ENCODE measurements at regions of chr7 and their contacts with region 1.

Region 1: DNA sequence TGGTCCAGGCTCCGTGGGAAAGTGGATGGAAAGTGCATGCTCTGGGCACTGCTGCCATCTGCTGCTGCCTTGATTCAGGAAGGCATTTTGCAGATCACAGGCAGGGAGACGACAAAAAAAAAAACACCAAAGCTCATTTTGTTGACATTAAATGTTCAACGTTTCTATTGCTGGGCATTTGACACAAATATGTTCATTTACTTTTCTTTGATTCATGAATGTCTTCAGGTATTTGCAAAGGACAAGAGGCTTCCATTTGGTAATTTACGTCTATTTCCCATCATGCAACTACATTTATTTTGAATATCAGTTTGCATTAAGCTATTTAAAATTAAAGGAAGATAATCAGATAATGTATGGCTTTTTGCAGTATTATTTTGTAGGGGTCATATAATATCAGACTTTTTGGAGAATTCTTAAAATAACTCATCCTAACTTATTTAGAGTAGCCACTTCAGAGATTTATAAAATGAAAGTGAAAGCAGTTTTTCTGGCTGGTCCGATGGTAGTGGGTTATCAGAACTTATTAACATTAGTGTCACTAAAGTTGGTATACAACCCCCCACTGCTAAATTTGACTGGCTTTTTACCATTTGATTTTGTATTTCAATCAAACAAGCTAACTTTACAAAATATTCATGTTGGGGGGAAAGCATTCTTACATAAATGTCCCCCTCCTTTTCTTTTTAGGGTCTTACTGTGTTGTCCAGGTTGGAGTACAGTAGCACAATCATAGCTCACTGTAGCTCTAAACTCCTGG is 65.3 kb downstream of the PDIA4 start:
- DNase-seq: peak; percentile 86
- H3K4me3 Mint-ChIP-seq: peak overlapping the region; percentile 91
- H3K27ac Mint-ChIP-seq: peak overlapping the region; percentile 95
- H3K4me1 Mint-ChIP-seq: peaks cover 25% of the 10 kb centered on the region
- H3K27me3 Mint-ChIP-seq: no peaks in the 10 kb centered on the region

Region 2: GRCh38 chr7:148262721-148263229 is 700.2 kb before region 1 on chr7:
- CTCF ChIA-PET with region 1: interaction called, 7 read pairs
- intact Hi-C with region 1: loop called (anchors 1 kb)
- DNase-seq: peak; percentile 77
- H3K4me3 Mint-ChIP-seq: peak overlapping the region; percentile 23
- H3K27ac Mint-ChIP-seq: no peak overlapping the region
- H3K4me1 Mint-ChIP-seq: peaks cover 8% of the 10 kb centered on the region
- H3K27me3 Mint-ChIP-seq: peaks cover 9% of the 10 kb centered on the region

Region 3: GRCh38 chr7:148535217-148535616 is 427.8 kb before region 1 on chr7:
- CTCF ChIA-PET with region 1: no interaction called
- intact Hi-C with region 1: loop called (anchors 1 kb)
- DNase-seq: peak; percentile 79
- H3K4me3 Mint-ChIP-seq: peak overlapping the region; percentile 69
- H3K27ac Mint-ChIP-seq: peak overlapping the region; percentile 76
- H3K4me1 Mint-ChIP-seq: peaks cover 10% of the 10 kb centered on the region
- H3K27me3 Mint-ChIP-seq: peaks cover 10% of the 10 kb centered on the region

Region 4: GRCh38 chr7:148807436-148807835 is 155.6 kb before region 1 on chr7:
- CTCF ChIA-PET with region 1: interaction called, 9 read pairs
- intact Hi-C with region 1: loop called (anchors 2 kb)
- DNase-seq: no peak
- H3K4me3 Mint-ChIP-seq: no peak overlapping the region
- H3K27ac Mint-ChIP-seq: no peak overlapping the region
- H3K4me1 Mint-ChIP-seq: peaks cover 8% of the 10 kb centered on the region
- H3K27me3 Mint-ChIP-seq: no peaks in the 10 kb centered on the region

Region 5: GRCh38 chr7:148940702-148941597 is 22.1 kb before region 1 on chr7:
- CTCF ChIA-PET with region 1: interaction called, 9 read pairs
- intact Hi-C with region 1: loop called (anchors 1 kb)
- DNase-seq: peak; percentile 68
- H3K4me3 Mint-ChIP-seq: peak overlapping the region; percentile 94
- H3K27ac Mint-ChIP-seq: peak overlapping the region; percentile 98
- H3K4me1 Mint-ChIP-seq: peaks cover 15% of the 10 kb centered on the region
- H3K27me3 Mint-ChIP-seq: no peaks in the 10 kb centered on the region

Region 6: DNA sequence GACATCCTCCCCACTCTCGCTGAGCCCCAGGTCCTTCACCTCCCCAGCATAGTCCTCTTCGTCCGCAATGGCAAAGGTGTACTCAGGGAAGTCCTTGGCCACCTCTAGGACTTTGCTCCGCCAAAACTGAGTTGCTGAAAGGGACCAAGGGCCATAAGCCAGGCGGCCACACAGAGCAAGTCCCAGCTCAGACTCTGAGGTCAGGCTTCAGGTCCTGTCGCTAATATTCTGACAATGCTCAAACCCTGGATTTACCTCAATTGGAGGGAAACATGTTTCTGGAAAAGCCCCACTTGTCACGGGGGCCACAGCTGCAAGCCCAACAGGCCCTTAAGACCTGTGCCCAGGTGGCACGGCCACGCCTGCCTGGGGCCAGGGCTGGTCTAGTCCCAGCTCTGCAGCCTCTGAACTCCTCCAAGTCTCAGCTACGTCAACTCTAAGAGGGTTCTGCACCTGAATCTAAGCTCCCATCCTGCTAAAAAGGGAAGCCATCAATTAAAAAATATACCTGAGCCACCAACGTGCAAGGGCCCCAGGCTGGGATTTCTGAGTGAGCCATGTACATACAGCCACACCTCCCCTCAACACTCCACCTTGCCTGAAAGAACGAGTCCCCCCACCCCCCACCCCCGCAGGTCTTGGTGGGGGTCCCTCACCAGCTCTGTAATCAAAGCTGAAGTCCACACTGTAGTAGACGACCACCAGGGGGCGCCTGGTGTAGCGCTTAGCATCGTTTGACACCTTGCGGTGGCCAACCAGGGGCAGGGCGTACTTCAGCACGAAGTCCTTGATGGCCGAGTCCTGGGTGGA is 42.4 kb after region 1 on chr7:
- CTCF ChIA-PET with region 1: no interaction called
- intact Hi-C with region 1: no loop called
- DNase-seq: peak; percentile 88
- H3K4me3 Mint-ChIP-seq: no peak overlapping the region
- H3K27ac Mint-ChIP-seq: no peak overlapping the region
- H3K4me1 Mint-ChIP-seq: peaks cover 3% of the 10 kb centered on the region
- H3K27me3 Mint-ChIP-seq: no peaks in the 10 kb centered on the region

Region 7: GRCh38 chr7:149090397-149091195 is 127.6 kb after region 1 on chr7 and contains the start of gene ZNF786:
- CTCF ChIA-PET with region 1: no interaction called
- intact Hi-C with region 1: loop called (anchors 1 kb)
- DNase-seq: peak; percentile 94
- H3K4me3 Mint-ChIP-seq: peak within 1 kb of the TSS; percentile 90
- H3K27ac Mint-ChIP-seq: peak within 1 kb of the TSS; percentile 99
- H3K4me1 Mint-ChIP-seq: peaks cover 20% of the 10 kb centered on the region
- H3K27me3 Mint-ChIP-seq: no peaks in the 10 kb centered on the region
- total RNA-seq, gene ZNF786: 2.1 to 2.2 TPM